PC-3 (cell line): ENCODE measurements at regions of chr14 and their contacts with region 1.

Region 1: GRCh38 chr14:104078031-104078455 is 7.5 kb upstream of the ASPG start:
- DNase-seq: peak; percentile 96
- ATAC-seq: peak; percentile 98
- H3K4me3 ChIP-seq: no peak overlapping the region
- H3K27ac ChIP-seq: no peak overlapping the region
- H3K4me1 ChIP-seq: no peaks in the 10 kb centered on the region; the same call in 1 of the 2 replicates
- H3K27me3 ChIP-seq: no peaks in the 10 kb centered on the region
- CTCF ChIP-seq: peak; percentile 100

Region 2: DNA sequence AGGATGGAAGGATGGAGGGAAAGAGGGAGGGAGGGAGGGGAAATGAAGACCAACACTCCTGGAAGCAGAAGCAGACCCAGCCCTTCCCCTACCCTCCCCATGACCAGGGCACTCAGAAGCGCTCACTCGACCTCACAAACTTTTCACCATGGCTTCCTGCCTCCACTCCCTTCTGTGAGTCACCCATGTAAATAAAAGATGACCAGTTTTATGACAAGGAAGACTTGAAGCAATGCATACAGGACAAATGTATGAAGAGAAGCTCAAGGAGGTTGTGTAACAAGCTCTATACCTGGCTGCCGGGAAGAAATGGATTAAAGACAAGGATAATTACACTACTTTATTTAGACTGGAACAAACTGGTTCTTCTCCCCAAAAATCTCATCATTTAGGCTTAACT is 1084.5 kb before region 1 on chr14:
- CTCF ChIA-PET with region 1: no interaction called
- POLR2A ChIA-PET with region 1: no interaction called
- intact Hi-C with region 1: no loop called
- DNase-seq: peak; percentile 95
- ATAC-seq: peak; percentile 93
- H3K4me3 ChIP-seq: peak overlapping the region; percentile 36; the same call in 1 of the 2 replicates
- H3K27ac ChIP-seq: peak overlapping the region; percentile 91
- H3K4me1 ChIP-seq: peaks cover 35% of the 10 kb centered on the region
- H3K27me3 ChIP-seq: no peaks in the 10 kb centered on the region
- CTCF ChIP-seq: no peak

Region 3: GRCh38 chr14:103808403-103809001 is 269.5 kb before region 1 on chr14:
- CTCF ChIA-PET with region 1: interaction called, 6 read pairs
- POLR2A ChIA-PET with region 1: no interaction called
- intact Hi-C with region 1: loop called (anchors 10 kb)
- DNase-seq: peak; percentile 88
- ATAC-seq: peak; percentile 91
- H3K4me3 ChIP-seq: no peak overlapping the region
- H3K27ac ChIP-seq: no peak overlapping the region
- H3K4me1 ChIP-seq: no peaks in the 10 kb centered on the region
- H3K27me3 ChIP-seq: no peaks in the 10 kb centered on the region
- CTCF ChIP-seq: peak; percentile 89

Region 4: GRCh38 chr14:103920981-103921854 is 156.8 kb before region 1 on chr14:
- CTCF ChIA-PET with region 1: no interaction called
- POLR2A ChIA-PET with region 1: no interaction called
- intact Hi-C with region 1: loop called (anchors 1 kb)
- DNase-seq: peak; percentile 96
- ATAC-seq: peak; percentile 98
- H3K4me3 ChIP-seq: peak overlapping the region; percentile 77
- H3K27ac ChIP-seq: peak overlapping the region; percentile 58
- H3K4me1 ChIP-seq: peaks cover 7% of the 10 kb centered on the region
- H3K27me3 ChIP-seq: no peaks in the 10 kb centered on the region
- CTCF ChIP-seq: peak; percentile 85

Region 5: GRCh38 chr14:103994535-103995182 is 83.4 kb before region 1 on chr14:
- CTCF ChIA-PET with region 1: interaction called, 15 read pairs
- POLR2A ChIA-PET with region 1: no interaction called
- intact Hi-C with region 1: loop called (anchors 1 kb)
- DNase-seq: peak; percentile 94
- ATAC-seq: peak; percentile 82
- H3K4me3 ChIP-seq: peak overlapping the region; percentile 49
- H3K27ac ChIP-seq: peak overlapping the region; percentile 81
- H3K4me1 ChIP-seq: peaks cover 42% of the 10 kb centered on the region
- H3K27me3 ChIP-seq: no peaks in the 10 kb centered on the region
- CTCF ChIP-seq: no peak

Region 6: GRCh38 chr14:104130974-104131651 is 53.1 kb after region 1 on chr14:
- CTCF ChIA-PET with region 1: interaction called, 8 read pairs
- POLR2A ChIA-PET with region 1: no interaction called
- intact Hi-C with region 1: loop called (anchors 1 kb)
- DNase-seq: peak; percentile 79
- ATAC-seq: peak; percentile 75
- H3K4me3 ChIP-seq: no peak overlapping the region
- H3K27ac ChIP-seq: no peak overlapping the region
- H3K4me1 ChIP-seq: no peaks in the 10 kb centered on the region
- H3K27me3 ChIP-seq: peaks cover 23% of the 10 kb centered on the region
- CTCF ChIP-seq: peak; percentile 94

Region 7: DNA sequence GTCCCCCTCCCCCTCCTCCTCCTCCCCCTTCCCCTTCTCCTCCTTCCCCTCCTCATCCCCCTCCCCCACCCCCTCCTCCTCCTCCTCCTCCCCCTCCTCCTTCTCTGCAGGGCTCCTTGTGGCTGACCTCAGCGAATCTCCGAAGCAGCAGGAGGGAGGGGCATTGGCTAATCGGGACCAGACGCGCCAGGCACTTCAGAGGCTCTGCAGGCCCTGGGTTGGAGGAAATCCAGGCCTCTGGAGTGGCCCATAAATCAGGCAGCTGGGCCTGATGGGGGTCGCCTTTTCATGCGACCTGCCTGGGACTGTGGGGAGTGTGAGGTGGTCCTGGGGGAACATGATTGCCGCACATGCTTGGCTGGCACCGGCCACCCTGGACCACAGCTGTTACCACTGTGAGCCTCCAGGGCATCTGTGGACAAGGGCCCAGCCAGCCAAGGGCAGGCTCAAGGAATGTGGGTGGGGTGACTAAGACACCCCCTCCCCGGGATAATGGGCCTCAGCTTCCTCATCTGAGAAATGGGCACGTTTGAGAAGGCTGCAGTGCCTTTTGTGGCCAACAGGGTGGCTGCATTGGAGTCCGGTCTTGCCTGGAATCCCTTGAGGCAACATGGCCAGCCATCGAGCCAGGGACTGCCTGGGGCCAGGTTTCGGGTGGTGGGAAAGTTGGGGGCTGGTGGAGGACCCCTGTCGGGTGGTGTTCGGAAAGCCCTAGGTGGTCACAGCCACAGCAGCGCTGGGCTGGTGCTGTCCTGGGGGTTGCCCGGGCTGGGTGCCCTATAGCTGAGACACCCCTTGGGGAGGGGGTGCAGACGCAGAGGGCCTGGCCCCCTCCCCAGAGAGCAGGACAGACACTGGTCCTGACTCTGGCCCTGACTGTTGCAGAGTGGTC is 72.3 kb after region 1 on chr14:
- CTCF ChIA-PET with region 1: no interaction called
- POLR2A ChIA-PET with region 1: no interaction called
- intact Hi-C with region 1: no loop called
- DNase-seq: no peak
- ATAC-seq: no peak
- H3K4me3 ChIP-seq: no peak overlapping the region
- H3K27ac ChIP-seq: no peak overlapping the region
- H3K4me1 ChIP-seq: no peaks in the 10 kb centered on the region
- H3K27me3 ChIP-seq: no peaks in the 10 kb centered on the region
- CTCF ChIP-seq: peak; percentile 28; the same call in 1 of the 2 replicates

Region 8: DNA sequence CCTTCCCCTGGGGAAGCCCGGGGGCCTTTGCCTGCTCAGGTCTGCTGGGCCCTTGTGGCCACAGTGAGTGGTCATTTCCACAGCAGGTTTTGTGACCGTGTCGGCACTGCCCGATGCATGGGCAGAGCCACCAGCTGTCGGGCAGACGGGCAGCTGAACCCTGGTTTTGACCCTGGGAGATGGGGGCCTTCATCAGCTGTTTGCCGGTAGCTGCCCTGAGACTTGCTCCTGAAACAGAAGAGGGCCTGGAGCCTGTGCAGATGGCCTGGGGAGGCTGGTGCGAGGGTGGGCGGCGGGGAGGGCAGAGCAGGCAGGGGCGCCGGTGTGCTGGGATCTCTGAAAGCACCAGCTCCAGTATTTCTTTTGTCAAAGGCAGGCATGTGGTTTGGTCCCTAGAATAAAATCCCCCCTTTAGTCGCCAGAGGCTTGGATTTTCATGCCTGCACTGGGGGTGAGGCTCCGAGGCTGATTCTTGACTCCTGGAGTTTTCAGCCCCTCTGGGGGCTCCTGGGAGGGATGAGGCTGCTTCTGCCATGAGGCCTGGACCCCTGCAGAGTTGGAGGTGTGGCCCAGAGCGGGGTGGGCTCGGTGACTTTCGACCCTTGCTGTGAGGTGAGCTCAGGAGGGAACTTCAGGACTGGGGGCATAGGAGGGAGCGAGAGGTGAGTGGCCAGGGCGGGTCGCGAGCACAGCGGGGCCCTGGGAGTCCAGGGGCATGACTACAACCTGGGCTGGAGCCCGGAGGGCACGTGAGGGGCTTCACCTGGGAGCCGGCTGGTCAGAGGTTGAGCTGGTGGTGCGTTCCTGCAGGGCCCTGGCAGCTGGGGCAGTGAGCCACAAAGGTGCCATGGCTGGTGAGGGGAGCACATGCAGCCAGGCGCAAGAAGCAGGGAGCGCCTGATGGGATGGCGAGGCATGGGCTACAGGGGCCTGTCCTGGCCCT is 228.3 kb after region 1 on chr14:
- CTCF ChIA-PET with region 1: no interaction called
- POLR2A ChIA-PET with region 1: no interaction called
- intact Hi-C with region 1: no loop called
- DNase-seq: no peak
- ATAC-seq: no peak
- H3K4me3 ChIP-seq: no peak overlapping the region
- H3K27ac ChIP-seq: no peak overlapping the region
- H3K4me1 ChIP-seq: no peaks in the 10 kb centered on the region
- H3K27me3 ChIP-seq: peaks cover 34% of the 10 kb centered on the region; the same call in 1 of the 2 replicates
- CTCF ChIP-seq: no peak

Region 9: DNA sequence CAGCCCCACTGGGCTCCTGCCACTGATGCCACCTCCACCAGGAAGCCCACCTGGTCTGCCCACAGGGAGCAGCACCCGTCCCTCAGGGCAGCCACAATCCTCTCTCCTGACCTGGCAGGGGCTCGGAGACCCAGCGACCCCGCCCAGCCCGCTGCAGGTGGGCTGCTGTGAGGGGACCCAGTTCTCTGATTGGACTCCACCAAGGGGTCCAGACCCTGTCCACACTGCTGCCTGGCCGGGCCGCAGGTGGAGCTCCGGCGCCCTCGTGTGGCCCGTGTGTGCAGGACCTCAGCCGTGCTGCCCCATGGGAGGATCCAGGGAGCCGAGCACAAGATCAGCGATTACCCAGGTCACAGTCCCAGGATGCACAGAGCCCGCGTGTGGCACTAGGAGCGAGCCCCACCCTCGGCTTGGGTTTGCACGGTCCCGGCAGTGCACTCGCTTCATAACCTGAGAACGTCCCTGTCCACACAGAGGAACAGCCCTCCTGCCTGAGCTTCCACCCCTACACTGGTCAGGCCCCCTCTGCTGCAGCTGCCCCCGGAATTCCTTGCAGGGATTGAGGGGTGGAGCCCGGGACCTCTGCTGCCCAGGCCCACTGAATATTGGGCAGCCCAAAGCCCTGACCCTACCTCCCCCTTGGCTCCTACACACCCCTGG is 562.0 kb after region 1 on chr14:
- CTCF ChIA-PET with region 1: no interaction called
- POLR2A ChIA-PET with region 1: no interaction called
- intact Hi-C with region 1: loop called (anchors 10 kb)
- DNase-seq: peak; percentile 73
- ATAC-seq: peak; percentile 96
- H3K4me3 ChIP-seq: no peak overlapping the region
- H3K27ac ChIP-seq: no peak overlapping the region
- H3K4me1 ChIP-seq: 0 out of 2 replicates have a peak, but pooled peaks cover 10% of the 10 kb centered on the region
- H3K27me3 ChIP-seq: peaks cover 40% of the 10 kb centered on the region
- CTCF ChIP-seq: peak; percentile 95